ENCODE measurements at regions of chr6 and their contacts with region 1.

Region 1: GRCh38 chr6:166382933-166383801 is at the start of gene MPC1:
- DNase-seq: peak; percentile 81
- ATAC-seq: peak; percentile 94
- H3K4me3 ChIP-seq: peak within 1 kb of the TSS; percentile 88
- H3K27ac ChIP-seq: peak within 1 kb of the TSS; percentile 81
- H3K4me1 ChIP-seq: peaks cover 5% of the 10 kb centered on the region
- H3K27me3 ChIP-seq: no peaks in the 10 kb centered on the region
- CTCF ChIP-seq: 0 out of 6 replicates have a peak, but pooled peaks of 1 of the 3 experiments have one; percentile 0
- EP300 ChIP-seq: no peak
- POLR2A ChIP-seq: peak; percentile 88
- RAD21 ChIP-seq: no peak
- polyA plus RNA-seq, gene MPC1: 81.5 to 97.0 TPM

Region 2: DNA sequence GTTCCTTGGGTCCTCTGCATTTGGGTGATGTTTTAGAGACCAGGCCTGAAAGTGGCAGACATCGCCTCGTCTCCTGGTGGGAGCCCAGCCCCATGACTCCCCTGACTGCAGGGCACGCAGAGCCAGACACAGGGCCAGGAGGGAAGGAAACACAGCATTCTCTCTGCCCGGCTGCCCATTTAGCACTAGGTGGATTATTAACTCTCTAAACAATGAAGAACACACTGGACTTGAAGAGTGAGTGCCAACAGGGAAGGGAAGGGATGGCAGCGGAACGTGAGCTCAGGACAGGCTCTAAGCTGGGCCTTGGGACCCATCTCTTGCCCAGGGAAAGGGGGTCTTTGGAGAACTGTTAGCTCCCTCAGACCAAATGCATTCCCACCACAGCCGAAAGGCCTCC is 295.9 kb before region 1 on chr6:
- CTCF ChIA-PET with region 1: no interaction called
- POLR2A ChIA-PET with region 1: no interaction called
- RAD21 ChIA-PET with region 1: no interaction called
- SMC1A ChIA-PET with region 1: no interaction called
- in situ Hi-C with region 1: no loop called
- intact Hi-C with region 1: no loop called
- DNase-seq: no peak
- ATAC-seq: no peak
- H3K4me3 ChIP-seq: no peak overlapping the region
- H3K27ac ChIP-seq: no peak overlapping the region
- H3K4me1 ChIP-seq: no peaks in the 10 kb centered on the region
- H3K27me3 ChIP-seq: no peaks in the 10 kb centered on the region
- CTCF ChIP-seq: no peak
- EP300 ChIP-seq: no peak
- POLR2A ChIP-seq: no peak
- RAD21 ChIP-seq: no peak

Region 3: DNA sequence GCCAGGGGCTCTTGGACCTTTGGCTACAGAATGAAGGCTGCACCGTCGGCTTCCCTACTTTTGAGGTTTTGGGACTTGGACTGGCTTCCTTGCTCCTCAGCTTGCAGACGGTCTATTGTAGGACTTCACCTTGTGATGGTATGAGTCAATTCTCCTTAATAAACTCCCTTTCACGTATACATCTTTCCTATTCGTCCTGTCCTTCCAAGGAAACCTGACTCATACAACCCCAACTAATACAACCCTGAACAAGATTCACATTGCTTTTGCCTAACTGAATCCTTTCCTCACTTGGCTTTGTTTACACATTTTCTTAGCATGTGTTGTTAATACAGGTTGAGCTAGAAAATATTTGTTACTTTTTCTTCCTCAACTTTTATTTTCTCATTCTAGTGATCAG is 237.4 kb before region 1 on chr6:
- CTCF ChIA-PET with region 1: no interaction called
- POLR2A ChIA-PET with region 1: no interaction called
- RAD21 ChIA-PET with region 1: no interaction called
- SMC1A ChIA-PET with region 1: no interaction called
- in situ Hi-C with region 1: no loop called
- intact Hi-C with region 1: no loop called
- DNase-seq: no peak
- ATAC-seq: no peak
- H3K4me3 ChIP-seq: no peak overlapping the region
- H3K27ac ChIP-seq: no peak overlapping the region
- H3K4me1 ChIP-seq: no peaks in the 10 kb centered on the region
- H3K27me3 ChIP-seq: no peaks in the 10 kb centered on the region; a peak in 1 of 4 replicates
- CTCF ChIP-seq: no peak
- EP300 ChIP-seq: no peak
- POLR2A ChIP-seq: no peak
- RAD21 ChIP-seq: no peak

Region 4: GRCh38 chr6:166281104-166281503 is 102.1 kb before region 1 on chr6:
- CTCF ChIA-PET with region 1: interaction called, 39 read pairs
- POLR2A ChIA-PET with region 1: no interaction called
- RAD21 ChIA-PET with region 1: interaction called, 24 read pairs
- SMC1A ChIA-PET with region 1: interaction called, 17 read pairs
- in situ Hi-C with region 1: loop called (anchors 5 kb)
- intact Hi-C with region 1: loop called (anchors 1 kb)
- DNase-seq: no peak
- ATAC-seq: peak; percentile 67
- H3K4me3 ChIP-seq: no peak overlapping the region
- H3K27ac ChIP-seq: peak overlapping the region; percentile 48
- H3K4me1 ChIP-seq: peaks cover 38% of the 10 kb centered on the region
- H3K27me3 ChIP-seq: no peaks in the 10 kb centered on the region
- CTCF ChIP-seq: no peak
- EP300 ChIP-seq: no peak
- POLR2A ChIP-seq: no peak
- RAD21 ChIP-seq: no peak

Region 5: GRCh38 chr6:166313255-166314070 is 69.7 kb before region 1 on chr6:
- CTCF ChIA-PET with region 1: interaction called, 211 read pairs
- POLR2A ChIA-PET with region 1: interaction called, 13 read pairs
- RAD21 ChIA-PET with region 1: interaction called, 73 read pairs
- SMC1A ChIA-PET with region 1: interaction called, 79 read pairs
- in situ Hi-C with region 1: no loop called
- intact Hi-C with region 1: loop called (anchors 1 kb)
- DNase-seq: peak; percentile 44
- ATAC-seq: peak; percentile 97
- H3K4me3 ChIP-seq: no peak overlapping the region
- H3K27ac ChIP-seq: no peak overlapping the region
- H3K4me1 ChIP-seq: no peaks in the 10 kb centered on the region
- H3K27me3 ChIP-seq: no peaks in the 10 kb centered on the region; a peak in 1 of 4 replicates
- CTCF ChIP-seq: peak; percentile 90 to 91 (median 91)
- EP300 ChIP-seq: no peak
- POLR2A ChIP-seq: no peak
- RAD21 ChIP-seq: peak; percentile 91

Region 6: GRCh38 chr6:166325383-166326042 is 57.7 kb before region 1 on chr6:
- CTCF ChIA-PET with region 1: interaction called, 45 read pairs
- POLR2A ChIA-PET with region 1: interaction called, 11 read pairs
- RAD21 ChIA-PET with region 1: interaction called, 45 read pairs
- SMC1A ChIA-PET with region 1: interaction called, 36 read pairs
- in situ Hi-C with region 1: loop called (anchors 5 kb)
- intact Hi-C with region 1: no loop called
- DNase-seq: peak; percentile 43
- ATAC-seq: peak; percentile 96
- H3K4me3 ChIP-seq: no peak overlapping the region
- H3K27ac ChIP-seq: peak overlapping the region; percentile 4; the same call in 1 of the 2 replicates
- H3K4me1 ChIP-seq: peaks cover 11% of the 10 kb centered on the region
- H3K27me3 ChIP-seq: no peaks in the 10 kb centered on the region
- CTCF ChIP-seq: no peak; a peak in 1 of 6 replicates
- EP300 ChIP-seq: peak; percentile 60 to 84; a peak in 3 of 4 replicates
- POLR2A ChIP-seq: no peak
- RAD21 ChIP-seq: no peak

Region 7: GRCh38 chr6:166342349-166343149 is 40.6 kb before region 1 on chr6 and contains the start of gene SFT2D1:
- CTCF ChIA-PET with region 1: interaction called, 45 read pairs
- POLR2A ChIA-PET with region 1: interaction called, 24 read pairs
- RAD21 ChIA-PET with region 1: interaction called, 33 read pairs
- SMC1A ChIA-PET with region 1: interaction called, 39 read pairs
- in situ Hi-C with region 1: no loop called
- intact Hi-C with region 1: loop called (anchors 1 kb)
- DNase-seq: peak; percentile 66
- ATAC-seq: peak; percentile 84
- H3K4me3 ChIP-seq: peak within 1 kb of the TSS; percentile 96
- H3K27ac ChIP-seq: peak within 1 kb of the TSS; percentile 99
- H3K4me1 ChIP-seq: peaks cover 3% of the 10 kb centered on the region; the same call in 1 of the 2 replicates
- H3K27me3 ChIP-seq: no peaks in the 10 kb centered on the region
- CTCF ChIP-seq: no peak
- EP300 ChIP-seq: peak; percentile 64 to 68; a peak in 2 of 4 replicates
- POLR2A ChIP-seq: peak; percentile 99
- RAD21 ChIP-seq: no peak
- polyA plus RNA-seq, gene SFT2D1: 119 to 149 TPM

Region 8: DNA sequence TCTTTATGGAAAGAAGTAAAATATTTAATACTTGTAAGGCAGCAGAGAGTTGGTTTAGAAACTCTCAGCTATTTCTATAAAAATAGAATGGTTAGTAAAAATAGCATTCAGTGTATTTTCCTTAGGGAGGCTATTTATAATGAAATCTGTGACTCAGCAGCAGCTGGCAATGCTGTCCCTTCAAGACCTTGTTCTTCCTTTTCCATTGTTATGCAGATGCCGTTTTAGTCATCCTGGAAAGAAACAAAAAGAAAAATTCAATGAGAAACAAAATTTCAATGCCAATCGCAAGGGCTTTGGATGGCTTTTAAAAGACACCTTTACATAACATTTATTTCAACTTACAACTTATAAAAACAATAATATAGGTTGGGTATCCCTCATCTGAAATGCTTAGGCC is 17.9 kb before region 1 on chr6:
- CTCF ChIA-PET with region 1: interaction called, 11 read pairs
- POLR2A ChIA-PET with region 1: no interaction called
- RAD21 ChIA-PET with region 1: interaction called, 14 read pairs
- SMC1A ChIA-PET with region 1: interaction called, 7 read pairs
- in situ Hi-C with region 1: no loop called
- intact Hi-C with region 1: no loop called
- DNase-seq: no peak
- ATAC-seq: no peak
- H3K4me3 ChIP-seq: no peak overlapping the region
- H3K27ac ChIP-seq: no peak overlapping the region
- H3K4me1 ChIP-seq: no peaks in the 10 kb centered on the region
- H3K27me3 ChIP-seq: no peaks in the 10 kb centered on the region
- CTCF ChIP-seq: no peak
- EP300 ChIP-seq: no peak
- POLR2A ChIP-seq: no peak
- RAD21 ChIP-seq: no peak

Region 9: DNA sequence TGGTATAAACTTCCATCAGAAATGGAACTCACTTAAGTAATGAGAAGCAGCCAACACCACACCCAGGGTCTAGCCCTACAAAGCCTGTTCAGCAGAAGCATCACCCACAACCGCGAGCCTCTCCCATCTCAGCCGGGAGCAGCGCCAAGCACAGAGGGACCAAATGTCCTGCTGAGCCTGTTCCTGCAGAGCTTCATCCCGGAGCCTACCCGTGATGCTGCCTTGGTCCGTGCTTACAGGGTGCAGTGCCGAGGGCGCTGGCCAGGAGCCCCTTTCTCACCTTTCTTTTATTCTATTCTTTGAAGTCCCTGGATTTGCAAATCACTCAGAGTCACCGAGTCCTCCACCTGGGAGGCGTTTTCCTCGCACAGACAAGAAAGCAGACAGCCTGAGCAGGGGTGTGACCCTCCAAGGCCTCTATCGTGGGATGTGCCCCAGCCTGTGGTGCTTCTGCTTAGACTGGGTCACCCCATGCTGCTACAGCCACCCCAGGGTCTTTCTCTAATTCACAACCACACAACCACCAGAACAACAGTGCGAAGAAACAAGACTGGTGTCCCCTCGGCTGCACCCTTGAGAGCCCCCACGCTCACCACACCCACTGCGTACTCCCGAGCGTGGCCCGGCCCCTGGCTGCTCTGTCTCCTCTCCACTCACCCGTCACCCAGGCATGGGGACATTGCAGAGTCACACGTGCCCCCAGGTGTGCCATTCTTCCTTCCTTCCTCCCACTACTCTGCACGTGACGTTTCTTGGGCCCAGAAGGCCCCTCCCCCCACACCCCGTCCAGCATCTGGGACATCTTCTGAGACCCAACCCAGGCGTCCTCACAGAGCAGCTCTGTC is 91.8 kb after region 1 on chr6:
- CTCF ChIA-PET with region 1: no interaction called
- POLR2A ChIA-PET with region 1: no interaction called
- RAD21 ChIA-PET with region 1: no interaction called
- SMC1A ChIA-PET with region 1: no interaction called
- in situ Hi-C with region 1: no loop called
- intact Hi-C with region 1: no loop called
- DNase-seq: no peak
- ATAC-seq: no peak
- H3K4me3 ChIP-seq: no peak overlapping the region
- H3K27ac ChIP-seq: no peak overlapping the region
- H3K4me1 ChIP-seq: no peaks in the 10 kb centered on the region
- H3K27me3 ChIP-seq: no peaks in the 10 kb centered on the region; a peak in 1 of 4 replicates
- CTCF ChIP-seq: no peak
- EP300 ChIP-seq: no peak
- POLR2A ChIP-seq: no peak
- RAD21 ChIP-seq: no peak

Measured in GM12878 (cell line).